IMR-90 (cell line): ENCODE measurements at regions of chr19 and their contacts with region 1.

Region 1: GRCh38 chr19:43784981-43785808 is 4.4 kb upstream of the KCNN4 start:
- DNase-seq: peak; percentile 67
- ATAC-seq: peak; percentile 84
- H3K4me3 ChIP-seq: no peak overlapping the region
- H3K27ac ChIP-seq: peak overlapping the region; percentile 5
- H3K4me1 ChIP-seq: peaks cover 12% of the 10 kb centered on the region
- H3K27me3 ChIP-seq: no peaks in the 10 kb centered on the region
- CTCF ChIP-seq: peak; percentile 99
- POLR2A ChIP-seq: peak; percentile 51; the same call in 1 of the 2 replicates
- RAD21 ChIP-seq: peak; percentile 100

Region 2: DNA sequence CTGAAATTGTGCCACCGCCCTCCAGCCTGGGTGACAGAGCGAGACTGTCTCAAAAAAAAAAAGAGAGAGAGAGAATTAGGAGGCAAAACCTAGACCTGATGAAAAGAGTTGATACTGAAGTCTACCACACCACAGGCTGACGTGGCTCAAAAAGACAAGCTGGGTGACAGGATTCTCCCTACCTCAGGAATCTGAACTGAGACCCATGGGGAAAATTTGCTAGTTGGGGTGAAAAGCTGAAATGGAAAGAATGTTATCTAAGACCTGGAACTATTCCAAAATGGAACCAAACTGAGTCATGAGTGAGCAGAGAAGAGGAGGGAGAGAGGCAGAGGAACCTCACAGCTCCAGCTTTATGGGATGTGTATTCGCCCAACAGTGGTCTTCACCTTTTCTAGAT is 42.2 kb before region 1 on chr19:
- CTCF ChIA-PET with region 1: interaction called, 3 read pairs
- POLR2A ChIA-PET with region 1: no interaction called
- dilution Hi-C with region 1: no loop called
- in situ Hi-C with region 1: loop called (anchors 5 kb)
- intact Hi-C with region 1: loop called (anchors 1 kb)
- DNase-seq: peak; percentile 57
- ATAC-seq: peak; percentile 65
- H3K4me3 ChIP-seq: no peak overlapping the region
- H3K27ac ChIP-seq: no peak overlapping the region
- H3K4me1 ChIP-seq: 0 out of 2 replicates have a peak, but pooled peaks cover 1% of the 10 kb centered on the region
- H3K27me3 ChIP-seq: no peaks in the 10 kb centered on the region
- CTCF ChIP-seq: no peak
- POLR2A ChIP-seq: no peak
- RAD21 ChIP-seq: no peak